Esophagus muscularis mucosa (tissue), 4 donors: ENCODE measurements at regions of chr5 and their contacts with region 1.

Region 1: GRCh38 chr5:39074016-39074886 is at the start of gene RICTOR:
- DNase-seq: peak; percentile 96
- H3K4me3 ChIP-seq: peak within 1 kb of the TSS; percentile 90 to 99 (median 95)
- H3K27ac ChIP-seq: peak within 1 kb of the TSS; percentile 96 to 100 (median 99)
- H3K4me1 ChIP-seq: peaks cover 20 to 63% (median 52%) of the 10 kb centered on the region in 4 donors
- H3K27me3 ChIP-seq: no peaks in the 10 kb centered on the region
- CTCF ChIP-seq: no peak
- EP300 ChIP-seq: no peak
- POLR2A ChIP-seq: peak; percentile 22
- total RNA-seq, gene RICTOR: 22.5 to 34.1 (median 26.1) TPM

Region 2: DNA sequence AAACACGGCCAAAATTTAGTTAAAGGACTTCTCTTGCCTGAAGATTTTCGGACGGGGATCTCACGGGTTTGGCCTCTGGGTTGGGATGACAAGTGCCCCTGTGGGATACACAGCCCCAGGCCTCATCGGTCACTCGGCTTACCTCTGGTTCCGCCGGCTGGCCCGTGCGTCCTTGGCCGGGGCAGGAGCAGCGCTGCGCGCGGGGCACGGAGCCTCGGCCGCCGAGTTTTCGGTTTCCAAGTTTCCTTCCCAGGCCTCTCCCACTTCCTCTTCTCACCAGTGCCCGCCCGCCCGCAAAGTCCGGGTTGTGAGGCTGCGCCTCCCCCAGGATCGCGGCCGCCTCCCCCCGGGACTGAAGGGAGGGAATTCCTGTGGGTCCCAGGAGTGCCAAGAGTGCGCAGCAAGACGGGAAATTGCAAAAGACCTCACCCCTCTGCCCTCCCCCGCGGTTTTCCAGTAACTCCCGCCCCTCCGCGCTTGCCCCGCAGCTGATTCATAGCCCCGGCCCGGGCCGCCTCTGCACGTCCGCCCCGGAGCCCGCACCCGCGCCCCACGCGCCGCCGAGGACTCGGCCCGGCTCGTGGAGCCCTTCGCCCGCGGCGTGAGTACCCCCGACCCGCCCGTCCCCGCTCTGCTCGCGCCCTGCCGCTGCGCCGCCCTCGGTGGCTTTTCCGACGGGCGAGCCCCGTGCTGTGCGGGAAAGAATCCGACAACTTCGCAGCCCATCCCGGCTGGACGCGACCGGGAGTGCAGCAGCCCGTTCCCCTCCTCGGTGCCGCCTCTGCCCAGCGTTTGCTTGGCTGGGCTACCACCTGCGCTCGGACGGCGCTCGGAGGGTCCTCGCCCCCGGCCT is 228.5 kb before region 1 on chr5 and contains the start of gene OSMR:
- intact Hi-C with region 1: loop called (anchors 10 kb)
- DNase-seq: peak; percentile 98
- H3K4me3 ChIP-seq: peak within 1 kb of the TSS; percentile 77 to 86 (median 81)
- H3K27ac ChIP-seq: peak within 1 kb of the TSS; percentile 91 to 96 (median 95)
- H3K4me1 ChIP-seq: peaks cover 4 to 61% (median 54%) of the 10 kb centered on the region in 4 donors
- H3K27me3 ChIP-seq: no peaks in the 10 kb centered on the region
- CTCF ChIP-seq: peak in 1 of 3 experiments; percentile 13
- EP300 ChIP-seq: peak; percentile 91
- POLR2A ChIP-seq: peak; percentile 85
- total RNA-seq, gene OSMR: 33.2 to 69.7 (median 43.9) TPM

Region 3: GRCh38 chr5:39005566-39006232 is 68.6 kb before region 1 on chr5:
- intact Hi-C with region 1: loop called (anchors 5 kb)
- DNase-seq: no peak
- H3K4me3 ChIP-seq: no peak overlapping the region
- H3K27ac ChIP-seq: no peak overlapping the region
- H3K4me1 ChIP-seq: peaks cover 6 to 20% (median 7%) of the 10 kb centered on the region in 4 donors
- H3K27me3 ChIP-seq: no peaks in the 10 kb centered on the region
- CTCF ChIP-seq: peak; percentile 32 to 47 (median 40)
- EP300 ChIP-seq: no peak
- POLR2A ChIP-seq: no peak

Region 4: GRCh38 chr5:39117401-39117800 is 43.1 kb after region 1 on chr5:
- intact Hi-C with region 1: no loop called
- DNase-seq: no peak
- H3K4me3 ChIP-seq: no peak overlapping the region
- H3K27ac ChIP-seq: no peak overlapping the region
- H3K4me1 ChIP-seq: peaks cover 0 to 5% (median 2%) of the 10 kb centered on the region in 4 donors
- H3K27me3 ChIP-seq: no peaks in the 10 kb centered on the region
- CTCF ChIP-seq: no peak
- EP300 ChIP-seq: no peak
- POLR2A ChIP-seq: no peak